Gastrocnemius medialis (tissue), 4 donors: ENCODE measurements at regions of chr6 and their contacts with region 1.

Region 1: GRCh38 chr6:6927521-6928371 is 180.0 kb upstream of the RREB1 start:
- DNase-seq: peak; percentile 73 to 90
- ATAC-seq: peak; percentile 76 to 79
- H3K4me3 ChIP-seq: peak overlapping the region; percentile 35 to 53 (median 47)
- H3K27ac ChIP-seq: peak overlapping the region; percentile 92 to 97 (median 96)
- H3K4me1 ChIP-seq: peaks cover 32 to 57% of the 10 kb centered on the region in 2 donors
- H3K27me3 ChIP-seq: no peaks in the 10 kb centered on the region
- CTCF ChIP-seq: peak in 4 of 5 experiments; percentile 23 to 52 (median 44)
- POLR2A ChIP-seq: peak; percentile 31 to 39

Region 2: GRCh38 chr6:6366803-6367202 is 560.9 kb before region 1 on chr6:
- in situ Hi-C with region 1: no loop called
- intact Hi-C with region 1: no loop called
- DNase-seq: no peak
- ATAC-seq: no peak
- H3K4me3 ChIP-seq: no peak overlapping the region
- H3K27ac ChIP-seq: no peak overlapping the region
- H3K4me1 ChIP-seq: no peaks in the 10 kb centered on the region
- H3K27me3 ChIP-seq: no peaks in the 10 kb centered on the region
- CTCF ChIP-seq: no peak
- POLR2A ChIP-seq: no peak

Region 3: DNA sequence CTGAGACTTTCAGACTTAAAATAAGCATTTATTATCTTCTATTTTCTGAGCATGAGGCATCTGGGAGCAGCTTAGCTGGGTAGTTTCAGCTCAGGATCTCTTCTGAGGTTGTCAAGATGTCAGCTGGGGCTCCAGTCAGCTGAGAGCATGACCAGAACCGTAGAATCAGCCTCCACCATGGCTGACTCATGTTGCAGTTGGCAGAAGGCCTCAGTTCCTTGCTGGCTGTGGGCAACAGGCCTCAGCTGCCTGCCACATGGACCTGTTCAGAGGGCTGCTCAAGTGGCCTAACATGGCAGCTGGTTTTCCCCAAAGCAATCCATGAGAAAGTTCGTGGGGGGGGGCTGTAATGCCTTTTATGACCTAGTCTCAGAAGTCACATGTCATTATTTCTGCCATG is 196.9 kb before region 1 on chr6:
- in situ Hi-C with region 1: loop called in 3 of 4 experiments (anchors 25 kb)
- intact Hi-C with region 1: loop called (anchors 5 kb)
- DNase-seq: peak; percentile 93 to 98
- ATAC-seq: peak; percentile 95 to 97
- H3K4me3 ChIP-seq: no peak overlapping the region
- H3K27ac ChIP-seq: peak overlapping the region; percentile 79 to 89 (median 82)
- H3K4me1 ChIP-seq: peaks cover 0 to 22% of the 10 kb centered on the region in 2 donors
- H3K27me3 ChIP-seq: no peaks in the 10 kb centered on the region
- CTCF ChIP-seq: no peak
- POLR2A ChIP-seq: peak in 1 of 2 donors; percentile 34

Region 4: GRCh38 chr6:6890400-6890858 is 37.3 kb before region 1 on chr6:
- in situ Hi-C with region 1: no loop called
- intact Hi-C with region 1: loop called (anchors 1 kb)
- DNase-seq: peak in 1 of 2 donors; percentile 67
- ATAC-seq: no peak
- H3K4me3 ChIP-seq: peak overlapping the region in 1 of 4 donors; percentile 5
- H3K27ac ChIP-seq: peak overlapping the region; percentile 93 to 98 (median 96)
- H3K4me1 ChIP-seq: peaks cover 44 to 56% of the 10 kb centered on the region in 2 donors
- H3K27me3 ChIP-seq: no peaks in the 10 kb centered on the region
- CTCF ChIP-seq: no peak
- POLR2A ChIP-seq: no peak

Region 5: GRCh38 chr6:7042056-7042653 is 114.4 kb after region 1 on chr6:
- in situ Hi-C with region 1: loop called in 1 of 4 experiments (anchors 10 kb)
- intact Hi-C with region 1: no loop called
- DNase-seq: no peak
- ATAC-seq: no peak
- H3K4me3 ChIP-seq: no peak overlapping the region
- H3K27ac ChIP-seq: peak overlapping the region; percentile 75 to 88 (median 84)
- H3K4me1 ChIP-seq: peaks cover 17 to 19% of the 10 kb centered on the region in 2 donors
- H3K27me3 ChIP-seq: no peaks in the 10 kb centered on the region
- CTCF ChIP-seq: no peak
- POLR2A ChIP-seq: no peak

Region 6: DNA sequence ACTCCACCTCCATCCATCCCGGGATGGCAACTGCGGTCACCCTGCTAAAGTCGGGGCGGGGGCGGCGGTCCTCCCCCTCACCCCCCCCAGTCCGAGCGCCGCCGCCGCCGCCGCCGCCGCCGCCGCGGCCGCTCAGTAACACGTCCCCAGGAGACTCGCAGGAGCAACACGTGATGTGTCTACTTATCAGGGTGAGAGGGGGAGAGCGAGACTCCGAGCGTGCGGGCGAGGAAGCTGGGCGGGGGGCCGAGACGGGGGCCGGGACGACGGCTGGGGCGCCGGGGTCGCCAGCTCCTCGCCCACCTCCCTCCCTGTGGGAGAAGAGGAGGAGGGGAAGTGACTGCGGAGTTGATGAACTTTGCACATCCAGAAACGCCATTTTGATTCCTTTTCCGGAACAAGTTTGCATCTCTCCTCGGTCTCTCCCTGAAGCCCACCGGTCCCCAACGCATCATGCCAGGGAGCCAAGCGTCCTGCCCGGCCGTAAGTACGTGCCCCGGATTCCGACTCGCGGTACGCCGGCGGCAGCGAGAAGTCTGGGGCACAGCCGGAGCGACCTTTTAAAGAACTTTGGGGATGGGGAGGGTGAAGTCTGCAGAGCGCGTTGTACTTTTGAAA is 179.9 kb after region 1 on chr6 and contains the start of gene RREB1:
- in situ Hi-C with region 1: no loop called
- intact Hi-C with region 1: loop called (anchors 5 kb)
- DNase-seq: peak; percentile 64 to 71
- ATAC-seq: peak; percentile 82 to 85
- H3K4me3 ChIP-seq: peak within 1 kb of the TSS; percentile 93 to 98 (median 96)
- H3K27ac ChIP-seq: peak within 1 kb of the TSS; percentile 85 to 96 (median 94)
- H3K4me1 ChIP-seq: peaks cover 17 to 22% of the 10 kb centered on the region in 2 donors
- H3K27me3 ChIP-seq: no peaks in the 10 kb centered on the region
- CTCF ChIP-seq: no peak
- POLR2A ChIP-seq: peak; percentile 85 to 91
- total RNA-seq, gene RREB1: 18.0 to 41.3 (median 39.2) TPM

Region 7: GRCh38 chr6:7219310-7219709 is 291.6 kb after region 1 on chr6:
- in situ Hi-C with region 1: no loop called
- intact Hi-C with region 1: loop called (anchors 2 kb)
- DNase-seq: peak in 1 of 2 donors; percentile 65
- ATAC-seq: peak; percentile 9 to 10
- H3K4me3 ChIP-seq: no peak overlapping the region
- H3K27ac ChIP-seq: peak overlapping the region; percentile 85 to 95 (median 94)
- H3K4me1 ChIP-seq: peaks cover 65% of the 10 kb centered on the region in 2 donors
- H3K27me3 ChIP-seq: no peaks in the 10 kb centered on the region
- CTCF ChIP-seq: no peak
- POLR2A ChIP-seq: no peak